Transverse colon (tissue), 4 donors: ENCODE measurements at regions of chr4 and their contacts with region 1.

Region 1: GRCh38 chr4:115918149-115918548 is 804.7 kb upstream of the NDST4 start:
- DNase-seq: no peak
- H3K4me3 ChIP-seq: no peak overlapping the region
- H3K27ac ChIP-seq: no peak overlapping the region
- H3K4me1 ChIP-seq: no peaks in the 10 kb centered on the region
- H3K27me3 ChIP-seq: no peaks in the 10 kb centered on the region
- CTCF ChIP-seq: no peak
- EP300 ChIP-seq: no peak
- POLR2A ChIP-seq: no peak

Region 2: GRCh38 chr4:115334736-115335411 is 583.3 kb before region 1 on chr4:
- in situ Hi-C with region 1: no loop called
- intact Hi-C with region 1: no loop called
- DNase-seq: no peak
- H3K4me3 ChIP-seq: no peak overlapping the region
- H3K27ac ChIP-seq: no peak overlapping the region
- H3K4me1 ChIP-seq: no peaks in the 10 kb centered on the region
- H3K27me3 ChIP-seq: no peaks in the 10 kb centered on the region
- CTCF ChIP-seq: no peak
- EP300 ChIP-seq: no peak
- POLR2A ChIP-seq: no peak

Region 3: GRCh38 chr4:115986573-115986972 is 68.4 kb after region 1 on chr4:
- in situ Hi-C with region 1: no loop called
- intact Hi-C with region 1: loop called (anchors 2 kb)
- DNase-seq: no peak
- H3K4me3 ChIP-seq: no peak overlapping the region
- H3K27ac ChIP-seq: no peak overlapping the region
- H3K4me1 ChIP-seq: no peaks in the 10 kb centered on the region
- H3K27me3 ChIP-seq: no peaks in the 10 kb centered on the region
- CTCF ChIP-seq: no peak
- EP300 ChIP-seq: no peak
- POLR2A ChIP-seq: no peak